Posterior vena cava (tissue), 2 donors: ENCODE measurements at regions of chr2 and their contacts with region 1.

Region 1: DNA sequence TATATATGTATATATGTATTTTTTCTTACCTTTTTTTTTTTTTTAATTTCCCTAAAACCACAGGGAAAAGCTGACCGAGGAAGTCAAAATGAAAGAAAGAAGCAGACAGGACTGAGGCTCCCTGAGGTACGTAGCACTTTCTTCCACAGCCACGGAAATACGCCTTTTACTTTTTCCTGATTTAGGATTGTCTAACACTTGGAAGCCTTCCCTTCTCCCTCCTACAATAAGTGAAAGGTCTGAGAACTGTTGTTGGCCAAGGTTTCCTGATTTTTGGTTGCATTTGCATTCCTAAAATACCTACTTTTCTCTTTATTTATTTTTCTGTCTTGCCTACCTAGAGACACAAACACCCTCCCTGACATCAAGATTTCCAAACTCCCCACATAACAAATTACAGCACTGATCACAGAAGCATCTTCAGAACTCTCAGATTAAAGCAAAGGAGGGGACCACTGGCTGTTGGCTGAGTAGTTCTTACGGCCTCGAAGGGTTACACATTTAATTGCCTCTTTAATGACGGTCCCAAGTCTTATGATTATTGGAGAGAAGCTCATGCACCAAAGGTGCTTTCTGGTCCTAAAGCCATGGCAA is 778.5 kb upstream of the FANCL start:
- DNase-seq: no peak

Region 2: GRCh38 chr2:57549642-57550102 is 1470.0 kb before region 1 on chr2:
- intact Hi-C with region 1: loop called in 1 of 2 experiments (anchors 5 kb)
- DNase-seq: no peak